ENCODE measurements at regions of chr10 and their contacts with region 1.

Region 1: GRCh38 chr10:60816628-60817397 is 38.5 kb downstream of the CDK1 start:
- H3K4me3 Mint-ChIP-seq: peak overlapping the region; percentile 57
- H3K27ac Mint-ChIP-seq: peak overlapping the region; percentile 82
- H3K4me1 Mint-ChIP-seq: peaks cover 23% of the 10 kb centered on the region
- H3K27me3 Mint-ChIP-seq: peaks cover 2% of the 10 kb centered on the region

Region 2: DNA sequence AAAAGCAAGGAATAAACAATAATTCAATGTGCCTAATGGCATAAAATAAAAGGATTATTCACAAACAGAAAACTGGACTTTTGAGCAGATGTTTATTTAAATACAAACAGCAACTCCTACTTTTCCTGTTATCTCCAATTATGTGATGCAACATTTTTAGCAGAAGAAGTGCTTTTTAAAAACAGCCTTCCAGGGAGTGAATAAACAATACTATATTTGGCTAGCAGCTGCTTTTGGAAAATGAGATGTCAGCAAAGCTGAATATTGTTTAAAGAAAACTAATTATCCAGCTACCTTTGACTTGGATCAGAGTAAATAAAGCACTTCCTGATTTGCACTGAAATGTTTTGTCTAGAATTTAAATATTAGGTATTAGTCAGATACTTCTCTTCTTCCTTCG is 15.3 kb before region 1 on chr10:
- intact Hi-C with region 1: no loop called
- H3K4me3 Mint-ChIP-seq: no peak overlapping the region
- H3K27ac Mint-ChIP-seq: no peak overlapping the region
- H3K4me1 Mint-ChIP-seq: peaks cover 6% of the 10 kb centered on the region
- H3K27me3 Mint-ChIP-seq: no peaks in the 10 kb centered on the region

Region 3: GRCh38 chr10:60883187-60883586 is 66.4 kb after region 1 on chr10:
- intact Hi-C with region 1: no loop called
- H3K4me3 Mint-ChIP-seq: no peak overlapping the region
- H3K27ac Mint-ChIP-seq: no peak overlapping the region
- H3K4me1 Mint-ChIP-seq: peaks cover 5% of the 10 kb centered on the region
- H3K27me3 Mint-ChIP-seq: no peaks in the 10 kb centered on the region

Region 4: GRCh38 chr10:60964257-60965235 is 147.7 kb after region 1 on chr10:
- intact Hi-C with region 1: loop called (anchors 2 kb)
- H3K4me3 Mint-ChIP-seq: no peak overlapping the region
- H3K27ac Mint-ChIP-seq: no peak overlapping the region
- H3K4me1 Mint-ChIP-seq: peaks cover 34% of the 10 kb centered on the region
- H3K27me3 Mint-ChIP-seq: peaks cover 8% of the 10 kb centered on the region

Region 5: DNA sequence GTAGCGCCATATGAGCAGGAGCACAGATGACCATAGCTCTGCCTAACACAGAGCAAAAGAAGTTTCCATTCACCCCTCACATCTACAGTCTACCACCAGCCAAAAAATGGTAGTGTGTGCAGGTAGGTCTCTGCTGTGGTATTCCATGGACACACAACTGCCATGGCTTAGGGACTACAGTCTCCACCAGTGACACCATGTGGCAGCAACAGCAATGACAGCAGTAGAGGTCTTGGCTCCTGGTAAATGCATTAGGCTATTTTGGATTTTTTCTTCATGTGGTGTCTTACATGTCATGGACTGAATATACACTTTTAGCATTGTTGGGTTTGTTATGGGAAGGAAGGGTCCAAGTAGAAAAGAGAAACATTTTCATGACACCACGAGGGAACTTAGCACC is 775.8 kb after region 1 on chr10:
- intact Hi-C with region 1: loop called (anchors 5 kb)
- H3K4me3 Mint-ChIP-seq: no peak overlapping the region
- H3K27ac Mint-ChIP-seq: no peak overlapping the region
- H3K4me1 Mint-ChIP-seq: peaks cover 7% of the 10 kb centered on the region
- H3K27me3 Mint-ChIP-seq: no peaks in the 10 kb centered on the region

Region 6: GRCh38 chr10:61733358-61733940 is 916.6 kb after region 1 on chr10:
- intact Hi-C with region 1: loop called (anchors 2 kb)
- H3K4me3 Mint-ChIP-seq: no peak overlapping the region
- H3K27ac Mint-ChIP-seq: no peak overlapping the region
- H3K4me1 Mint-ChIP-seq: no peaks in the 10 kb centered on the region
- H3K27me3 Mint-ChIP-seq: no peaks in the 10 kb centered on the region